Prostate gland (tissue), 2 donors: ENCODE measurements at regions of chr15 and their contacts with region 1.

Region 1: DNA sequence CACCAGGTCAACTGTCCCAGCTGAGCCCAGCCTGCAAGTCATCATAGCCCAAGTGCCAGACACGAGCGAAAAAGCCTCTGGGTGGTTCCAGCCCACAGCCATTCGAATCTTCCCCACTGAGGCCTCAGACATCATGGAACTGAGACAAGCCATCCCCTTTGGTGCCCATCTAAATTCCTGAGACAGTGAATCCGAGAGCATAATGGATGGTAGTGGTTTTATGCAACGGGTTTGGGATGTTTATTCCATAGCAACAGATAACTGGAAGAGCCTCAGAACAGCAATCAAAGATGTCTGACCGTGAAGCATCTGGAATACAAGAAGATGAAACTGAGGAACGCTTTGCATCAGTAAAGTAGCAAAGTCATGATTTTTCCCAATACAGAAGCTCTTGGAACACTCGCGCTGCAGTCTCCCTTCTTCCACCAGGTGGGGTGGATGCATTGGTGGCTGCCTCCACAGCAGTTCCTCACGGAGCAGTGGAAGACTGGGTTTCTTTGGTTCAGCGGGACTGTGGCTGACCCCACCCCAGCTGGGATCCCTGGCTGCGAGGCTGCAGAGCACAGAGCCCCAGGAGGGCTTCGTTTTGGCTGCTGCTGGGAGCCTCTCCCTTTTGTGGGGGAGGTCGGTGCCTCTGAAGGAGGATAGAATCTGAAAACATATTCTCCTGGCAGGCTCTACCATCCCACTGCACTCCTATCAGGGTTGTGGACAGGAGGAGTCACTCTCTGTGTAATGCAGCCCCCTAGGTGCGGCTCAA is 26.4 kb upstream of the PDE8A start:
- DNase-seq: peak; percentile 70
- H3K4me3 ChIP-seq: no peak overlapping the region
- H3K27ac ChIP-seq: no peak overlapping the region
- H3K4me1 ChIP-seq: no peaks in the 10 kb centered on the region
- H3K27me3 ChIP-seq: no peaks in the 10 kb centered on the region
- CTCF ChIP-seq: peak; percentile 28 to 88 (median 84)
- POLR2A ChIP-seq: no peak

Region 2: DNA sequence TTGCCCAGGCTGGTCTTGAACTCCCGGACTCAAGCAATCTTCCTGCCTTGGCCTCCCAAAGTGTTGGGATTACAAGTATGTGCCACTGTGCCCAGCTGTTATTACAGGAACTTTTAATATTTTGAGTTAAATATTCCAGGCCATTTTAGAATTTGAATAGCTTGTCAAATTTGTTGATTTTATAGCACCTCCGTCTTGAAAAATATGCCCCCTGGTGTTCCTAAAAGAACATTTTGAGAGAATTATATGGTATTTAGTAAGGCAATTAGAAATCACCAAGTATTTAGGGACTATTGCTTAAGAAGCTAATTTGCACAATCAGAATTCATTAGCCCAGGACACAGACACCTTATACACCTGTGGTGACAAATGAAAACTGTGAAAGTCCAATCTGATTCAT is 50.0 kb after region 1 on chr15:
- intact Hi-C with region 1: loop called (anchors 10 kb)
- DNase-seq: no peak
- H3K4me3 ChIP-seq: no peak overlapping the region
- H3K27ac ChIP-seq: no peak overlapping the region
- H3K4me1 ChIP-seq: peaks cover 8% of the 10 kb centered on the region
- H3K27me3 ChIP-seq: no peaks in the 10 kb centered on the region
- CTCF ChIP-seq: no peak
- POLR2A ChIP-seq: no peak